PC-9 (cell line): ENCODE measurements at regions of chr11 and their contacts with region 1.

Region 1: DNA sequence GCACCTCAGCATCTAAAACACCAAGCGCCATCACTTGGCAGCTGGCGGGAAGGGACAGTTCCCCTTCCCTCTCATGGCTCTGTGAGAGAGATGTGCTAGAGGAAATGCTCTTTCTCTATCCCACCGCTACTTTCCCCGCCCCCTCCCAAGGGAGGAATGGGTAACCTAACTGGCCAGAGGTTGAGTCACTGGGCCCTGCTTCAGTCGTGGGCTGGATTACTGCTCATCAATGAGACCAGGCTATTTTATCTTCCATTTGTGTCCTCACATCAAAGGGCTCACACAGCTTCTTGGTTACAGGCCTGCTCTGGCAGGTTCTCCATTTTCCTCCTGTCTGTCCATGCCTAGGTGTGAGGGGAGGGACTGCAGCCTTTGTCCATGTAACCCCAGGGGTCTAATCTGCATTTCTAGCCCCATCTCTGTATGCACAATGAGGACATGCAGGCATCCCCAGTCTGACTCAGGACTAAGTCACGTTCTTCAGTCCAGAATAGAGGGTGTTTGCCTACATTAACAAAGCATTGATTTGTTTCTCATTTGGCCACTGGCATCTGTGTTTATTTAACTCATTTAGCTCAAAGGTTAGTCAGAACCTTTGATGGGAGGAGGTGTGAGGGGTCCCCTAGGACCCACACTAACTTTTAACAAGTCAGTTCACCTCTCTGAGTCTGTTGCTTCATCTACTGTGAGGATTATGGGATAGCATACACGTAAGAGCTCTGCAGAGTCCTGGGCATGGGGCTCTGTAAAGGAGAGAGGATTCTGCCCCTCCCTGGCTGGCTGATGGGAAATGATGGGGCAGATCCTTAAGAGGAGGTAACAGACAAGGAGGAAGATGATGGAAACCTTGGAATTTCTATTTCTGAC is 99.1 kb downstream of the XRRA1 start:
- DNase-seq: no peak
- H3K4me3 ChIP-seq: no peak overlapping the region
- H3K27ac ChIP-seq: no peak overlapping the region
- H3K4me1 ChIP-seq: no peaks in the 10 kb centered on the region
- H3K27me3 ChIP-seq: no peaks in the 10 kb centered on the region
- CTCF ChIP-seq: no peak

Region 2: DNA sequence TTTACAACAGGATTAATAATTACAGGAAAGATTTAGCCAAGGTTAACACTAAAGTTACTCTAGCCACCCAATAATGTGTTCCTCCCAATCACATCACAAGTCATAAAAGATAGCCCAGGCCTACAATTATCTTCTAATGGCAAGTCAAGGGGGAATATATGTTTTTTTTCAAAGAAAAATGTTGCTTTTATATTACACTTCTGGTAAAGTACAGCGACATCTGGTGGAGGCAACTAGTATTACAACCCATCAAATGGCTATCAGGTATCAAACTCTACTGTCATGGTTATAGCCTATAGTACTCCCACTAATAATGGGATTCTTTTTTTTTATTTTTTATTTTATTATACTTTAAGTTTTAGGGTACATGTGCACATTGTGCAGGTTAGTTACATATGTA is 27.4 kb after region 1 on chr11:
- CTCF ChIA-PET with region 1: no interaction called
- POLR2A ChIA-PET with region 1: interaction called, 13 read pairs
- intact Hi-C with region 1: no loop called
- DNase-seq: peak in 1 of 2 experiments; percentile 42
- H3K4me3 ChIP-seq: 0 out of 2 replicates have a peak overlapping the region, but pooled peaks have one; percentile 5
- H3K27ac ChIP-seq: no peak overlapping the region
- H3K4me1 ChIP-seq: no peaks in the 10 kb centered on the region
- H3K27me3 ChIP-seq: no peaks in the 10 kb centered on the region
- CTCF ChIP-seq: peak; percentile 83